ENCODE measurements at regions of chr1 and their contacts with region 1.

Region 1: GRCh38 chr1:205658943-205659581 is 21.2 kb downstream of the SLC45A3 start:
- H3K4me3 Mint-ChIP-seq: no peak overlapping the region
- H3K27ac Mint-ChIP-seq: no peak overlapping the region
- H3K4me1 Mint-ChIP-seq: peaks cover 27% of the 10 kb centered on the region
- H3K27me3 Mint-ChIP-seq: peaks cover 40% of the 10 kb centered on the region

Region 2: DNA sequence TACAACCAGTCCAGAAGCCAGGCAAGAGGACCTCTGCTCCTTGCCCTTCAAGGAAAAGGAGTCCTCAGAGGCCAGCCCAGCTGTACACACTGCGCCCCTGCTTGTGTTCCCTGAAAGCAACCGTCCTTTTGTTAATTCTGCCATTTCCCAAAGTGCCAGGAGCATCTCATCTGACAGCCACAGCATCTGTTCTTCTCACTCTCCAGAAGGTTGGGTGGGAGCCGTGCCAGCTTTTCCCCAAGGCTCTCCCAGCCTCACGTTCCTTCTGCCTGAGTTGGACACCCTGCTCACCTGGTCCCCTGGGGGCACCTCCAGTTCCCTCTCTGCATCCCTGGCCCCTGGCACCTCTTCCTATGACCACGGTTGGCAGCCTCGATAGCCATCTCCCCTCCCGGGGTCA is 626.6 kb before region 1 on chr1:
- intact Hi-C with region 1: no loop called
- H3K4me3 Mint-ChIP-seq: no peak overlapping the region
- H3K27ac Mint-ChIP-seq: no peak overlapping the region
- H3K4me1 Mint-ChIP-seq: no peaks in the 10 kb centered on the region
- H3K27me3 Mint-ChIP-seq: peaks cover 6% of the 10 kb centered on the region

Region 3: GRCh38 chr1:205528887-205529825 is 129.9 kb before region 1 on chr1:
- intact Hi-C with region 1: loop called (anchors 1 kb)
- H3K4me3 Mint-ChIP-seq: peak overlapping the region; percentile 35
- H3K27ac Mint-ChIP-seq: peak overlapping the region; percentile 24
- H3K4me1 Mint-ChIP-seq: peaks cover 11% of the 10 kb centered on the region
- H3K27me3 Mint-ChIP-seq: peaks cover 13% of the 10 kb centered on the region

Region 4: GRCh38 chr1:205543411-205544301 is 115.4 kb before region 1 on chr1:
- intact Hi-C with region 1: no loop called
- H3K4me3 Mint-ChIP-seq: peak overlapping the region; percentile 60
- H3K27ac Mint-ChIP-seq: peak overlapping the region; percentile 60
- H3K4me1 Mint-ChIP-seq: peaks cover 36% of the 10 kb centered on the region
- H3K27me3 Mint-ChIP-seq: peaks cover 54% of the 10 kb centered on the region

Region 5: GRCh38 chr1:205591522-205592351 is 67.3 kb before region 1 on chr1:
- intact Hi-C with region 1: loop called (anchors 1 kb)
- H3K4me3 Mint-ChIP-seq: peak overlapping the region; percentile 63
- H3K27ac Mint-ChIP-seq: no peak overlapping the region
- H3K4me1 Mint-ChIP-seq: peaks cover 14% of the 10 kb centered on the region
- H3K27me3 Mint-ChIP-seq: peaks cover 7% of the 10 kb centered on the region

Region 6: GRCh38 chr1:205631727-205632373 is 27.2 kb before region 1 on chr1 and contains the start of gene ELK4:
- intact Hi-C with region 1: loop called (anchors 2 kb)
- H3K4me3 Mint-ChIP-seq: peak within 1 kb of the TSS; percentile 100
- H3K27ac Mint-ChIP-seq: peak within 1 kb of the TSS; percentile 95
- H3K4me1 Mint-ChIP-seq: peaks cover 16% of the 10 kb centered on the region
- H3K27me3 Mint-ChIP-seq: no peaks in the 10 kb centered on the region

Region 7: GRCh38 chr1:205711104-205712020 is 52.3 kb after region 1 on chr1:
- intact Hi-C with region 1: loop called (anchors 1 kb)
- H3K4me3 Mint-ChIP-seq: no peak overlapping the region
- H3K27ac Mint-ChIP-seq: no peak overlapping the region
- H3K4me1 Mint-ChIP-seq: peaks cover 20% of the 10 kb centered on the region
- H3K27me3 Mint-ChIP-seq: peaks cover 2% of the 10 kb centered on the region

Region 8: DNA sequence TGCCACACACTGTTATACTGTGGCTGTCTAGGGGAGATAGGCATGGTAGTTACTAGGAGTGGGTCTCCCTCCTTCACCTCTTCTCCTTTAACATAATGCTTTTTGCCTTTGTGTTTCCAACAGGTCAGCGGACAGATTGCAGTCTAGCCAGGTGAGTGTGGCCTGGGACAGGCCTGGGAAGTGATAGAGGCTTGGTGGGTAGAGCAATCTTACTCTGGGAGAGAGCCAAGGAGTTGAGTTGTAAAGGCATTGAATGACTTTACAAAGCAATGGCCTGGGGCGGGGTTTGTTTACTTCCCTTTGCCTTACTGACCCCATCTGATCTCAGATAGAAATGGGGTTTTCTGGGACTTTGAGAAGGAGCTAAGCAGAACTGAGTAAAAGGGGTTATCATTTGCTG is 760.2 kb after region 1 on chr1:
- intact Hi-C with region 1: no loop called
- H3K4me3 Mint-ChIP-seq: no peak overlapping the region
- H3K27ac Mint-ChIP-seq: peak overlapping the region; percentile 67
- H3K4me1 Mint-ChIP-seq: peaks cover 9% of the 10 kb centered on the region
- H3K27me3 Mint-ChIP-seq: no peaks in the 10 kb centered on the region

Measured in dendritic cell treated with granulocyte-macrophage colony-stimulating factor and Interleukin-4, amounts not matched to agents 40 ng/mL and 50 ng/mL, for 4 days (primary cell).